Posterior vena cava (tissue), 2 donors: ENCODE measurements at regions of chr22 and their contacts with region 1.

Region 1: DNA sequence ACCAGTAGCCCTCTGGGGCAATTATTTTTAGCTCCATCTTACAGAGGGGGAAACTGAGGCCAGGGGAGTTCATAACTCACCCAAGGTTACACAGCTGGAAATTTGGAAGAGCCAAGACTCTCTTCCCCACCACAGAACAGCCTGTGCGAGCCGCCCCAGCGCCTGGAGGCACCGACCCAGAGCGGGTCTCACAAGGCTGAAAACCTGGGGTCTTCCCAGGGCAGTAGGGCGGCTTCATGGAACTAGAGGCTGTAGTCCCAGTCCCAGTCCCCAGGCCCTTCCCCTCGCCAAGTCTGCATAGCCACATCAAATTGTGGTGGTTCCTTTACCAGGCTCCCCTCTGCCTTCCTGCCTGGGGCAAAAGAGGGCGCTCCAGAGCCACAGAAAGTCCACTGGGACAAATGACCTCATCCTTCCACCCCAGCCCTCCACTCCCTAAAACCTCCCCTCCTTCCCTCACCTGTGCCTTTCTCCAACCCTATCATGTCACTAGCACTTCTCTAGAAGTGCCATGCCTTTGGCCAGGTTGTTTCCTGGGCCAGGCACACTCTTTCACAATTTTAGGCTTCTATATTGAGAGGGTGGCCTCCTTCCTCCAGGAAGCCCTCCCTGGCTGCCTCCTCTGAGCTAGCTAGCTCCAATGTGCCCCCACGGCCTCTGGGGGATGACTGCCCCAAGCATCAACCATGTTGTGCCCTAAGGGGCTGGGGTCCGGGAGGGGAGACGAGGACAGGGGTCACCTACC is 15.2 kb upstream of the CDC42EP1 start:
- DNase-seq: peak; percentile 90

Region 2: GRCh38 chr22:37588546-37589215 is 43.6 kb after region 1 on chr22:
- intact Hi-C with region 1: loop called (anchors 5 to 10 kb)
- DNase-seq: no peak

Region 3: DNA sequence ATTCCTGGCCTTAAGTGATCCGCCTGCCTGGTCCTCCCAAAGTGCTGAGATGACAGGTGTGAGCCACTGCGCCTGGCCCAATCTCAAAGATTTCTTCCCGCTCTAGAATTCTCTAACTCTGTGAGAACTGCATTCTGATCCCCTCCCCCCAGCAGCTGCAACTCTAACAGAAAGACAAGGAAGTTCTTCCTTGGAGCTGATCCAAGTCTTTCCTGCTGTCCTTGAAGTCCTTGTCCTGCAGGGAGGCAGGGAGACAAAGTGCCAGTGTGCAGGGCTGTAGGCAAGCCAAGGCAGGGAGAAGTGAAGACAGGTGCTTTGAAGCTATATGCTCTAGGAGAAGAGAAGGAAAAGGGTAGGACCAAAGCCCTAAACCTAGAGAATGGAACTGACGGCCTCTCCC is 54.0 kb after region 1 on chr22:
- intact Hi-C with region 1: loop called in 1 of 2 experiments (anchors 10 kb)
- DNase-seq: no peak

Region 4: GRCh38 chr22:38705235-38706100 is 1160.3 kb after region 1 on chr22 and contains the start of gene GTPBP1:
- intact Hi-C with region 1: no loop called
- DNase-seq: peak; percentile 99
- total RNA-seq, gene GTPBP1: 29.8 to 34.3 TPM